GM13977 (cell line): ENCODE measurements at regions of chr17 and their contacts with region 1.

Region 1: GRCh38 chr17:42928714-42929496 is 28.3 kb downstream of the G6PC1 start:
- DNase-seq: peak; percentile 72
- CTCF ChIP-seq: peak; percentile 54

Region 2: DNA sequence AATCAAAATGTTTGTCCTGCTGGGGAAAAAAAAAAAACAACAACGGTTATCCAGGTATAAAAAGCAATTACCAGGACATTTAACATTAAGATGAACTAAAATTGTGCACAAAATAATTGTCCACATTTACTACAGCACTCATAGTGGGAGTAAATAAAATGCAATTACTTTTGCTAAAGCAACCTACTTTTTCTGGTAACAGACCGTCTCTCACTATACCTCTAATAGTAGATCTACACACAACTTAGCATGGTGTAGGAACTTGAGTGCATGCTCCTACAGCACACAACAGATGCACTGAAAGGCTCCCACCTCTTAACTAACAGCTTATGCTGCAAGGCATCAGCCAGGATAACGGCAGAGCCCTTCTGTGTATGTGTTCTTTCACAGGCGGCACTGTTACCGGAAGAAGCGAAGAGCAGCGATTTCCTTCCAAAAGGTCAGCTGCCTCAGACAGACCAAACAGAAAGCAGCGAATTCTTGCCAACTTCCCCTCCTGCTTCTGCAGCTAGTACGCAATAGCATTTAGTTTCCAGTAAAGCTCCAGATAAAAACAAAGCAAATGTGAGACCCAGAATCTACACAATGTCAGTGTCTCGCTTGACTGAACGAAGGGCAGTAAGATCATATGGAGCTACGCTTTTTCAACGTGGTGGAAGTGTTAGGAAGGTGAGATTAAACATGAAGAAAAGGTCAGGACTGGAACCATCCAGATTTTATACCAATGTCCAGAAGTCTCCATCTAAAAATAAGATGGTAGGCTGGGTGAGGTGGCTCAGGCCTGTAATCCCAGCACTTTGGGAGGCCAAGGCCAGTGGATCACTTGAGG is 680.3 kb before region 1 on chr17:
- in situ Hi-C with region 1: no loop called
- DNase-seq: peak; percentile 75
- CTCF ChIP-seq: no peak

Region 3: DNA sequence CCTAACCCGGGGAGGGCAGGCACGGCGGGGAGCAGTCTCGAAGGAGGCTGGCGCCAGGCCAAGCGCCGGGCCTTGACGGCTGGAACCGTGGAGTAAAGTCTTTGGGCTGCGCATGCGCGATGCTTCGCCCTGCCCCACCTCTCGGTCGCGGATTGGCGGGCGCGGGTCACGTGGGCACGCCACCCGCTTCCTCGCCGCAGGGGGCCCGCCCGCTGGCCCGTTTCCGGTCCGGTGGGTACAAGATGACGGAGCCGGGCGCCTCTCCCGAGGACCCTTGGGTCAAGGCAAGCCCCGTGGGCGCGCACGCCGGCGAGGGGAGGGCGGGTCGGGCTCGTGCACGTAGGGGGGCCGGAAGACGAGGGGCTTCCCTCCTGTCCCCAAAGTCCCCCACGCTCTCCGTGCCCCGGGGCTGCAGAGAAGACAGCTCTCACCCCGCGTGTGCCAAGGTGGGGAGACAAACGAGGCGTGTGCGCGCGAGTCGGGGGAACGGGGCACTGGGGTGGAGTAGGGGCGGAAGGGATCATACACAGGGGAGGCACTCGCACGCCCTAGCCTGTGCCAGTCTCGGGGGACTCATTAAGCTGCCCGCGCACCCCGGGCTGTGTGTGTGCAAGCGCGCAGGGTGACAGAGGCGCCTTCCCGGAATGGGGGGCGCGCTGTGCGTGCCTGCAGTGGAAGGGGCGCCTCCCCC is 361.9 kb before region 1 on chr17 and contains the start of gene MLX:
- in situ Hi-C with region 1: loop called (anchors 25 kb)
- DNase-seq: peak; percentile 100
- CTCF ChIP-seq: no peak